Activated T-helper 1 cell treated with anti-CD3 and anti-CD28 coated beads, Interleukin-12 subunit alpha, Interleukin-12 subunit beta, Interleukin-2, Interleukin-4 antibody, amounts not matched to agents 30 ng/mL and 10 ng/mL and 1 ng/mL, durations not matched to agents 14 hours and 24 hours and 36 hours (primary cell): ENCODE measurements at regions of chr6 and their contacts with region 1.

Region 1: GRCh38 chr6:127291495-127291894 is 24.8 kb downstream of the RNF146 start:
- DNase-seq: no peak
- H3K4me3 Mint-ChIP-seq: peak overlapping the region; percentile 8
- H3K27ac Mint-ChIP-seq: peak overlapping the region; percentile 77
- H3K4me1 Mint-ChIP-seq: peaks cover 32% of the 10 kb centered on the region
- H3K27me3 Mint-ChIP-seq: no peaks in the 10 kb centered on the region

Region 2: DNA sequence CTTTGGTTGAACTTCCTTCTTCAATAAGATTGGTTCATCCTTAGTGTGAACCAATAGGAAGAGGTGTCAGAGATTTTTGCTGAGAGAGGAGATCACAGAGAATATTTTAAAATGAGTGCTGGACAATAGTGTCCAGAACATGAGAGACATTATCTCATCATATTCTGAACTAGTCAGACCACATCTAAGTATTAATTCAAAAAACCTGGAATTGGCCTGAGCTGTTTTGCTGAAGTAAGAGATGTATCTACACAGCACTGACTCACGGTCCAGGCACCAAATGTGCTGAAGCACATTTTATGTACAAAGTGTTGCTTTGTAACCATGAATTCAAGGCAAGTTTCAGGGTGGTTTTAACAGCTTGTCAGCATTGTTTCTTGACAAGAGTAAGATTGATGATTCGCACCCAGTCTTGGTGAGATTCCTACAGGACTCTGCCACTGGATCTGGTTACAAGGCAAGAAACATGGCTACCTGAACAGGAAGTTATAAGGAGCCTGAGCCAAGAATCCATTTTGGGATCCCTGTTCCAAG is 1720.2 kb before region 1 on chr6:
- intact Hi-C with region 1: no loop called
- DNase-seq: no peak
- H3K4me3 Mint-ChIP-seq: no peak overlapping the region
- H3K27ac Mint-ChIP-seq: no peak overlapping the region
- H3K4me1 Mint-ChIP-seq: no peaks in the 10 kb centered on the region
- H3K27me3 Mint-ChIP-seq: peaks cover 7% of the 10 kb centered on the region

Region 3: GRCh38 chr6:127266178-127266891 is 25.2 kb before region 1 on chr6 and contains the start of gene RNF146:
- intact Hi-C with region 1: loop called (anchors 1 kb)
- DNase-seq: peak; percentile 63
- H3K4me3 Mint-ChIP-seq: peak within 1 kb of the TSS; percentile 100
- H3K27ac Mint-ChIP-seq: peak within 1 kb of the TSS; percentile 100
- H3K4me1 Mint-ChIP-seq: peaks cover 42% of the 10 kb centered on the region
- H3K27me3 Mint-ChIP-seq: peaks cover 9% of the 10 kb centered on the region
- total RNA-seq, gene RNF146: 18.3 and 20.5 TPM in 2 replicates

Region 4: GRCh38 chr6:127403636-127404035 is 112.1 kb after region 1 on chr6:
- intact Hi-C with region 1: loop called (anchors 5 kb)
- DNase-seq: no peak
- H3K4me3 Mint-ChIP-seq: no peak overlapping the region
- H3K27ac Mint-ChIP-seq: peak overlapping the region; percentile 67
- H3K4me1 Mint-ChIP-seq: peaks cover 18% of the 10 kb centered on the region
- H3K27me3 Mint-ChIP-seq: no peaks in the 10 kb centered on the region